Heart right ventricle (tissue), 16 donors: ENCODE measurements at regions of chr10 and their contacts with region 1.

Region 1: GRCh38 chr10:5293691-5294550 is 70.8 kb upstream of the UCN3 start:
- DNase-seq: peak; percentile 21 to 69
- ATAC-seq: peak in 3 of 8 donors; percentile 14 to 45 (median 18)
- H3K4me3 ChIP-seq: no peak overlapping the region
- H3K27ac ChIP-seq: peak overlapping the region in 7 of 10 donors; percentile 12 to 82 (median 59)
- H3K4me1 ChIP-seq: peaks cover 3 to 67% (median 32%) of the 10 kb centered on the region in 9 donors
- H3K27me3 ChIP-seq: no peaks in the 10 kb centered on the region
- CTCF ChIP-seq: peak in 7 of 9 donors; percentile 27 to 60 (median 39)

Region 2: DNA sequence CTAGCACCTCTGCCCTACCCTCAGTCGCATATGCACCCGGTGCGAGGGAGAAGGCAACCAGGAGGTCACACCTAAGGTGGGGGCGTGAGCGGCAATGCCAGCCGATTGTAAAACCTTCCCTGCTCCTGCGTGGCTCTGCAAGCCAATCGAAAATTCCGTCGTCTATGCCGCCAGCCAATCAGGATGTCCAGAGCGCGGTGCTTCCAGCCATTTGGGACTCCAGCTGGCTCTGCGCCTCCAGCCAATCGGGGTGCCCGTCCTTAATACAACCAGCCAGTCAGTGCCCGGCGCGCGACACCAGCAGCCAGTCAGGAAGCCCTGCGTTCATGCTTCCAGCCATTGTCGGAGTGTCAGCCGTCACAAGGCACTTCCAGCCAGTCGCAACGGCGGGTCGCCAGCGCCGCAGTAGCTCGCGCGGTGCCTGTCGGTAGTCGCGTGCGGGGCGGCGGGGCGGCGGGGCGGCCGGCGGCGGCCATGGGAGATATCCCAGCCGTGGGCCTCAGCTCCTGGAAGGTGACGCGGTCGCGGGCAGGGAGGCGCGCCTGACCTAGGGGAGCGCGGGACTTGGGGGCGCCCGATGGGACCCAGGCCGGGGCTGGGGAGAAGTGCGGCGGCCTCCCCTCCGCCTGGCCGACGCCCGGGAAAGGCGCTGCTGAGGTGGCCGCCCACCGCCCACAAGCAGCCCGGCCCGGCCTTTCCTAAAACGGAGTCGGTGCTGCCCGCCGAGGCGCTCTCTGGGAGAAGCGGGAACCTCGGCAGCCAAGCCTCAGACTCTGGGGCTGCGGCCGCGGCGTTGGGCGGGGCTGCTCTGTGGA is 467.9 kb before region 1 on chr10 and contains the start of gene AKR1E2:
- intact Hi-C with region 1: loop called in 1 of 10 experiments (anchors 10 kb)
- DNase-seq: peak; percentile 90 to 94
- ATAC-seq: peak; percentile 93 to 96 (median 95)
- H3K4me3 ChIP-seq: peak within 1 kb of the TSS; percentile 51 to 77 (median 68)
- H3K27ac ChIP-seq: peak within 1 kb of the TSS; percentile 69 to 98 (median 94)
- H3K4me1 ChIP-seq: peaks cover 0 to 19% (median 8%) of the 10 kb centered on the region in 9 donors
- H3K27me3 ChIP-seq: peaks cover 0 to 8% (median 0%) of the 10 kb centered on the region in 7 donors
- CTCF ChIP-seq: peak in 1 of 9 donors; percentile 6
- total RNA-seq, gene AKR1E2: 2.0 to 6.5 (median 4.8) TPM

Region 3: DNA sequence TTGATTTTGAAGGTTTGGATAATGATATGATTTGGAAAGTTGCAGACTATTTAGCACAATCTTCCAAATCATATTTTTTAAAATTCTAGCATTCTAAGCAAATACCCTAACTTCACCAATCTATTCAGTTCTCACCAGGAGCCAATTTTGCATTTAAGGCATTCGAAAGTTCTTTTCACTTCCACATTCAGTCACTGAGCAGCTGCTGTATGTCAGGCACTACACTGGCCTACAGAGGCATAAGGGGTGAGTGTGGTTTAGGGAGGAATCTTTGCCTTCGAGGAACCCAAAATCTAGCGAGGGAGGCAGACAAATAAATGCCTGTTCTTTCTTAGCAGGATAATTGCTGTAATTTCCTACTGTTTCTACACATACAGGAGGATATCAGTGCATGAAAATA is 60.1 kb after region 1 on chr10:
- intact Hi-C with region 1: no loop called
- DNase-seq: no peak
- ATAC-seq: no peak
- H3K4me3 ChIP-seq: no peak overlapping the region
- H3K27ac ChIP-seq: no peak overlapping the region
- H3K4me1 ChIP-seq: no peaks in the 10 kb centered on the region
- H3K27me3 ChIP-seq: peaks cover 0 to 5% (median 0%) of the 10 kb centered on the region in 7 donors
- CTCF ChIP-seq: no peak

Region 4: GRCh38 chr10:5385224-5385623 is 91.3 kb after region 1 on chr10:
- intact Hi-C with region 1: loop called in 1 of 10 experiments (anchors 10 kb)
- DNase-seq: no peak
- ATAC-seq: no peak
- H3K4me3 ChIP-seq: no peak overlapping the region
- H3K27ac ChIP-seq: no peak overlapping the region
- H3K4me1 ChIP-seq: peaks cover 0 to 4% (median 0%) of the 10 kb centered on the region in 9 donors
- H3K27me3 ChIP-seq: no peaks in the 10 kb centered on the region
- CTCF ChIP-seq: no peak

Region 5: DNA sequence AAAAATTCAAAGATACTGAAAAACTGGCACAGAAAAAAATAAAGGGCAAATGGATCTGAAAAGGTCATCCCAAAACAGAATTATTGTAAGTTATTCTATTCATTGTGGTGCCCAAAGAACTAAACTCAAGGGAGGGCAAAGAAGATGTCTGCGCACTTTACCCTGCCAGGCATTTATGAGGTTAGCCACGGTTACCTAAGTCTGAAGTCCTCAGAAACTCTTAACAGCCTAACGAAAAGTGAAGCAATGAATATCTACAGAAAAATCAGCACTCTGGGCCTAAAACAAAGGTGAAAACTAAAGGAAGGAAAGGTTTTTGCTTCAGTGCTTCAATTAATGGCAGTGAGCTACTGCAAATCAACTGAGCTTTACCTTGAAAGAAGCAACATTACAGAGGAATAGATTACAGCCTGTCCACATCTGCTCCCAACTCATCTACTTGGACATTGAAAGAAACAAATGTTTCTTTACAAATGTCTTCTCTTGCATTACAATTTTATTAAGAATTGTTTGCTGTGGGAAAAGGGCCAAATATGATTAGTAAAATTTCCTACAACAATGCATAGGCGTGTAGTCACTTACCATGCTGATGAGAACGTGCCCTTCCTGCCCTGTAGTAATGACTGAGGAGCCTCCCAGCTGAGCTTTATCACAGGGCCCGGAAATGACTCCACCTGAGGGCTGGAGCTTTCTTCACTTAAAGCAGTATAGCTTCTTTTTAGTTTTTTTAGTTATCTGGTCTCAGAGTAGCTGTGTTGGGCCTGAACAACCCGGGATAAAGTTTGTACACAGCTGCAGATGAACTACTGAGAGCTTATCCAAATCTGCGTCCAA is 110.5 kb after region 1 on chr10 and contains the start of gene TUBAL3:
- intact Hi-C with region 1: loop called in 1 of 10 experiments (anchors 10 kb)
- DNase-seq: no peak
- ATAC-seq: peak in 6 of 8 donors; percentile 52 to 86 (median 80)
- H3K4me3 ChIP-seq: peak within 1 kb of the TSS in 4 of 10 donors; percentile 6 to 21 (median 8)
- H3K27ac ChIP-seq: peak within 1 kb of the TSS in 5 of 10 donors; percentile 13 to 69 (median 50)
- H3K4me1 ChIP-seq: peaks cover 0 to 11% (median 0%) of the 10 kb centered on the region in 9 donors
- H3K27me3 ChIP-seq: peaks cover 0 to 9% (median 0%) of the 10 kb centered on the region in 7 donors
- CTCF ChIP-seq: no peak
- total RNA-seq, gene TUBAL3: 0.14 to 0.72 (median 0.17) TPM in 7 of 10 donors, not detected in the others